Panc1 (cell line): ENCODE measurements at regions of chr20 and their contacts with region 1.

Region 1: GRCh38 chr20:45229264-45230056 is 8.3 kb downstream of the SEMG2 start:
- DNase-seq: no peak
- ATAC-seq: peak; percentile 73
- H3K4me3 ChIP-seq: peak overlapping the region in 1 of 2 experiments; percentile 14; a peak in 2 of 4 replicates
- H3K27ac ChIP-seq: no peak overlapping the region
- H3K4me1 ChIP-seq: no peaks in the 10 kb centered on the region
- H3K27me3 ChIP-seq: peaks cover 18% of the 10 kb centered on the region
- CTCF ChIP-seq: peak; percentile 84

Region 2: GRCh38 chr20:45124365-45124764 is 105.1 kb before region 1 on chr20 and contains the start of gene WFDC12:
- CTCF ChIA-PET with region 1: no interaction called
- POLR2A ChIA-PET with region 1: no interaction called
- in situ Hi-C with region 1: no loop called
- intact Hi-C with region 1: loop called (anchors 5 kb)
- DNase-seq: no peak
- ATAC-seq: no peak
- H3K4me3 ChIP-seq: no peak within 1 kb of the TSS
- H3K27ac ChIP-seq: no peak within 1 kb of the TSS
- H3K4me1 ChIP-seq: no peaks in the 10 kb centered on the region
- H3K27me3 ChIP-seq: peaks cover 15% of the 10 kb centered on the region
- CTCF ChIP-seq: no peak
- total RNA-seq, gene WFDC12: not detected

Region 3: GRCh38 chr20:45181639-45182038 is 47.8 kb before region 1 on chr20:
- CTCF ChIA-PET with region 1: no interaction called
- POLR2A ChIA-PET with region 1: interaction called, 10 read pairs
- in situ Hi-C with region 1: no loop called
- intact Hi-C with region 1: no loop called
- DNase-seq: no peak
- ATAC-seq: no peak
- H3K4me3 ChIP-seq: no peak overlapping the region
- H3K27ac ChIP-seq: no peak overlapping the region
- H3K4me1 ChIP-seq: no peaks in the 10 kb centered on the region
- H3K27me3 ChIP-seq: no peaks in the 10 kb centered on the region
- CTCF ChIP-seq: no peak

Region 4: DNA sequence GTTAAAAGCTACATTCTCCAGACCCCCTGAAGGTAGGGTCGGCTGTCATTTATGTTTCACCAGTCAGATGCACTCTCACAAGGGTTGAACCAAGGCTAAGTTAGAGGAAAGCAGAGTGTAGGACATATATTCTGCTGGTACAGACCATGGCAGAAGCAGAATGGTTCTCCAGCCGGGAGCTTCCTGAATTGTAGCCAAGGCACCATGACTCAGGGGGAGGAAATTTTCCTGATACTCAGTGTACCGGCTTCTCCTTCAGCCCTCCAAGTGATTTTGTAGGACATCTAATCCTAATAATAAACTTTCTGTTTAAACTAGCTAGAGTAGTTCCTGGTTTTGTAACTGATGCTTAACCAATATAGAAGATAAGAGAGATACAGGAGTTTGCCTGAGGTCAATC is 39.1 kb after region 1 on chr20:
- CTCF ChIA-PET with region 1: no interaction called
- POLR2A ChIA-PET with region 1: no interaction called
- in situ Hi-C with region 1: no loop called
- intact Hi-C with region 1: loop called (anchors 5 kb)
- DNase-seq: no peak
- ATAC-seq: no peak
- H3K4me3 ChIP-seq: no peak overlapping the region
- H3K27ac ChIP-seq: no peak overlapping the region
- H3K4me1 ChIP-seq: no peaks in the 10 kb centered on the region
- H3K27me3 ChIP-seq: peaks cover 21% of the 10 kb centered on the region
- CTCF ChIP-seq: no peak

Region 5: GRCh38 chr20:45311589-45312211 is 82.2 kb after region 1 on chr20:
- CTCF ChIA-PET with region 1: no interaction called
- POLR2A ChIA-PET with region 1: no interaction called
- in situ Hi-C with region 1: no loop called
- intact Hi-C with region 1: no loop called
- DNase-seq: no peak
- ATAC-seq: peak; percentile 90
- H3K4me3 ChIP-seq: peak overlapping the region in 1 of 2 experiments; percentile 26; a peak in 2 of 4 replicates
- H3K27ac ChIP-seq: no peak overlapping the region
- H3K4me1 ChIP-seq: peaks cover 4% of the 10 kb centered on the region; the same call in 1 of the 2 replicates
- H3K27me3 ChIP-seq: no peaks in the 10 kb centered on the region
- CTCF ChIP-seq: peak; percentile 97